Activated naive CD4-positive, alpha-beta T cell treated with anti-CD3 and anti-CD28 coated beads for 36 hours (primary cell): ENCODE measurements at regions of chr17 and their contacts with region 1.

Region 1: DNA sequence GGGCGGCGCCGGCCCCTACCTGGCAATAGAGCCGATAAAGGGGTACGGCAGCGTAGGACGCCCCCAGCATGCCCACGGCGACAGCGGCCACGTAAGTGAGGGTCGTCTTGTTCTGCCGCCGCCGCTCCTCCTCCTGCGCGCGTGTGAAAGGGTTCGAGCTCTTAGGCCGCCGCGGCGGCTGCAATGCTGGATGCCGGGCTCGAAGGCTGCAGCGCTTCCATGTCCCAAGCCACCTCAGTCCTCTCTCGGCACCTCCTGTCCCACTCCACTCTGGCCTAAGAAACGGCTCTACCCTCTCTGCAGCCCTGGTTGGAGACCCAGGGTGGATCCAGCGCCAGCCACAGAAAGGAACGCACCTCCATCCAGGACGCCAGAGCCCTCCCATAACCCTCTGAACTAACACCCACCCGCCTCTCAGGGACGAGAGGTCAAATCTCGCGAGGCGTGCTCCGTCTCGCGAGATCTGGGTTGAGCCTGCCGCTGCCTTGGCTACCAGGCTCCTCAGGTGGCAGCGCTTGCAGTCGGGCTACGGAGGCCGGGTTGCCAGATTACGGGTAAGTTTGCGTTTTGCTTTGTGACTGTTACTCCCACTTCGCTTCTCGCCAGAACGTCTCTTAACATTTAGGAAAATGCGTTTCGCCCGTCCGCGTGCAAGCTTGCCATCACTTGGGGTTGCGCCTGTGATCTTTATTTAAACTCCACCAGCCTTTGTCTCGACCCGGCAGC is at the starts of genes COX11 and STXBP4:
- DNase-seq: peak; percentile 96
- H3K4me3 Mint-ChIP-seq: no peak within 1 kb of the TSS
- H3K27ac Mint-ChIP-seq: no peak within 1 kb of the TSS
- H3K4me1 Mint-ChIP-seq: peaks cover 20% of the 10 kb centered on the region
- H3K27me3 Mint-ChIP-seq: no peaks in the 10 kb centered on the region
- total RNA-seq, gene COX11: 48.6 to 50.0 TPM
- total RNA-seq, gene STXBP4: 4.5 to 5.3 TPM

Region 2: GRCh38 chr17:54900457-54901229 is 67.8 kb before region 1 on chr17 and contains the start of gene TOM1L1:
- CTCF ChIA-PET with region 1: no interaction called
- intact Hi-C with region 1: loop called (anchors 1 kb)
- DNase-seq: peak; percentile 42
- H3K4me3 Mint-ChIP-seq: peak within 1 kb of the TSS; percentile 42
- H3K27ac Mint-ChIP-seq: no peak within 1 kb of the TSS
- H3K4me1 Mint-ChIP-seq: peaks cover 8% of the 10 kb centered on the region
- H3K27me3 Mint-ChIP-seq: peaks cover 41% of the 10 kb centered on the region
- total RNA-seq, gene TOM1L1: 1.2 to 1.3 TPM

Region 3: DNA sequence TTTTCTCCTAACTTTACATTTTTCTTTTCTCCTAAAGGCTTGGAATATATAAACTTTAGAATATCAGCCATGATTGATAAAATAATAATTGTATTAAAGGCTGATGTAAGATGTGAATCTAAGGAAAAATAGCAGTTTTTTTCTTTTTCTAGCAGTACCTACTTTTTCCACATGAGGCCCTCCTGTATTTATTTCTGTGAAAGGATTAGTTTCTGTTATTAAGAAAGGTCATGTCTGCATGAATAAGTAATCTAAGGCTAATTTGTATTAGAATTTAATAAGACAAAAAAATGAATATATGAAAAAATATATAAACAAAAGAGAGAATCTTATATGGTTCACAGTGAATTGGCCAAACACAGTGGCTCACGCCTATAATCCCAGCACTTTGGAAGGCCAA is 85.4 kb after region 1 on chr17:
- CTCF ChIA-PET with region 1: no interaction called
- intact Hi-C with region 1: no loop called
- DNase-seq: no peak
- H3K4me3 Mint-ChIP-seq: no peak overlapping the region
- H3K27ac Mint-ChIP-seq: no peak overlapping the region
- H3K4me1 Mint-ChIP-seq: no peaks in the 10 kb centered on the region
- H3K27me3 Mint-ChIP-seq: no peaks in the 10 kb centered on the region

Region 4: DNA sequence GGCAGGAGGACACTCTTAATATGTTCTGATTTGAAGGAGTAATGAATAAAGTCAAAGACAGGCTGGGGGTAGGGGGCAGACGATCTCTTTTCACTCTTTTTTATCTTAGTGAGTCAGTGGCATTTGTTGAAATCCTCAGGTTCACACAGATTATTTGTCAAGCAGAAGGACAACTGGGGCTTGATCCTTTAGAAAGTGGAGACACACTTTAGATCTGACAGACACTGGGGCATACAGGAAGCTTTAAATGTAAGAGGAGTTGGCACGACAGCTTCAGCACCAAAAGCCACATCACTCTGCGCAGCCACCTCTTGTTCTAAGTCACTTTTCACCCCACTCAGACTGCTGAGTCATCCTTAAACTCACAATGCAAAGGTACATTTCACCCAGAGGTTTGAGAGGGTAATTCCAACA is 121.7 kb after region 1 on chr17:
- CTCF ChIA-PET with region 1: no interaction called
- intact Hi-C with region 1: loop called (anchors 1 kb)
- DNase-seq: peak; percentile 54
- H3K4me3 Mint-ChIP-seq: no peak overlapping the region
- H3K27ac Mint-ChIP-seq: no peak overlapping the region
- H3K4me1 Mint-ChIP-seq: peaks cover 6% of the 10 kb centered on the region
- H3K27me3 Mint-ChIP-seq: no peaks in the 10 kb centered on the region

Region 5: DNA sequence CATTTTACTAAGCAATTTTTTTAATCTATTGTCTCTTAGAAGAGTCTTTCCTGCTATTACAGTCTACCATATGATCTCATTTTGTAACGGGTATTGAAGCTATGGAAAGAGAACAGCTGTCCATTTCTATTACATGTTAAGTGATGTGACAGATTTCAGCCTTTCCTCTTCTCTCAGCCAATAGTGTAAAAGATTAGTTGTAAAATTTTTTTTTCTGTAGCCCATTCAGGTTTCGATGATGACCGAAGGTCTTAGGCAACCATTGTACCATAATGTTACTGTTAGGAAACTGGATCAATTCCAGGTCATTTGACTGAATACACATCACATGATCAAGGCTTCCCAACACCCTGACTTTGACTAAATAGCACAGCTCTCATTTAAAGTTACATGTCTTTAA is 148.7 kb after region 1 on chr17:
- CTCF ChIA-PET with region 1: no interaction called
- intact Hi-C with region 1: no loop called
- DNase-seq: no peak
- H3K4me3 Mint-ChIP-seq: no peak overlapping the region
- H3K27ac Mint-ChIP-seq: no peak overlapping the region
- H3K4me1 Mint-ChIP-seq: no peaks in the 10 kb centered on the region
- H3K27me3 Mint-ChIP-seq: no peaks in the 10 kb centered on the region

Region 6: DNA sequence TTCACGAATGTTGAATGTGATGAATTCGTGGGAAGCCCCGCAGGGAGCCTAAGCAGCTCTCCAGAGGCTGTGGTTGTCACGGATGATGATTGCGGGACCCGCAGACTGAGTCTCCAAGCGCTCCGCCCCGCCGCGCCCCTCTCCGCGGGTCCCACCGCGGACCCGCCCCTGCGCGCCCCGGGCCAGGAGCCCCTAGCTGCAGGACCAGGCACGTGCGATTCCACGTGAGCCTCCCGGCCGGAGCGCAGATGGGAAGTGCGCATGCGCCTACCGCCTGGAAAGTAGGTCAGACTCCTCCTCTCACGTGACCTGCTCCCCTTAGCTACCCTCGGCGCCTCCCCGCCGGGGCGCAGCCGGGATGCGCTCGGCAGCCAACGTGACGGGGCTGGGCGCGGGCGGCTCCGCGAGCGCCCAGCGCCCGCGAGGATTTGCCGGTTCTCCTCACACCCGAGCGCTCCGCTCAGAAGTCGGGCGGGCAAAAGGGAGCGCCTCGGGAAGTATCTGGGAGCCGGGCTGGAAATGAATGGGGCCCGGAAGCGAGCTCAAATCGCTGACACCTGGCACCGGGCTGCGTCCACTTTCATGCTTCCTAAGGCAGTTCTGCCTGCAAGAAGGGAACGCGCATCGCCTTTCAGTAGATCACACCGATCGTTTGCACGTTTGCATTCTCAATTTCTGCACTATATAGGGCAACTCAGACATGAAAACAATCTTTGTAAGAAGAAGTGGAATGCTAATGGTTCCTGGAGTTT is 269.9 kb after region 1 on chr17:
- CTCF ChIA-PET with region 1: no interaction called
- intact Hi-C with region 1: loop called (anchors 1 kb)
- DNase-seq: peak; percentile 85
- H3K4me3 Mint-ChIP-seq: peak overlapping the region; percentile 77
- H3K27ac Mint-ChIP-seq: no peak overlapping the region
- H3K4me1 Mint-ChIP-seq: peaks cover 9% of the 10 kb centered on the region
- H3K27me3 Mint-ChIP-seq: peaks cover 24% of the 10 kb centered on the region

Region 7: DNA sequence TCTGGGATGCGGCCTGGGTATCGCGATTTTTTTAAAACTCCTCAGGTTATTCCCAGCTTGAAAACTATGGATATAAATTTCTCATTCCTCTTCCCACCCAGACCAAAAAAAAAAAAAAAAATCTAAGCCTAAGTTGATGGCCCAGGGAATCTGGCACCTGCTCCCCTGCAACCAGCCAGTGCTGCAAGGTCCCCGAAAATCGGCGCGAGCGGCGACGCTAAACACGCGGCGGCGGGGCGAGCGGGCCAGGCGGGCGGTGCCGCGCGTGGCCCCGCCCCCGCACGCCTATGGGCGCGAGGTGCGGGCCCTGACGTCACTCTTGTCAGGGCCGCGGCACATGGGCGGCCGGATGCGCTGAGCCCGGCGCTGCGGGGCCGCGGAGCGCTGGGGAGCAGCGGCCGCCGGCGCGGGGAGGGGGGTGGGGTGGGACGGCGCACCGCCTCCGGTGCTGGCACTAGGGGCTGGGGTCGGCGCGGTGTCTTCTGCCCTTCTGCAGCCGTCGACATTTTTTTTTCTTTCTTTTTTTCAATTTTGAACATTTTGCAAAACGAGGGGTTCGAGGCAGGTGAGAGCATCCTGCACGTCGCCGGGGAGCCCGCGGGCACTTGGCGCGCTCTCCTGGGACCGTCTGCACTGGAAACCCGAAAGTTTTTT is 296.3 kb after region 1 on chr17 and contains the start of gene HLF:
- CTCF ChIA-PET with region 1: no interaction called
- intact Hi-C with region 1: loop called (anchors 2 kb)
- DNase-seq: peak; percentile 68
- H3K4me3 Mint-ChIP-seq: peak within 1 kb of the TSS; percentile 48
- H3K27ac Mint-ChIP-seq: no peak within 1 kb of the TSS
- H3K4me1 Mint-ChIP-seq: peaks cover 13% of the 10 kb centered on the region
- H3K27me3 Mint-ChIP-seq: peaks cover 78% of the 10 kb centered on the region
- total RNA-seq, gene HLF: 0.79 to 0.86 TPM

Region 8: GRCh38 chr17:55735731-55736405 is 767.4 kb after region 1 on chr17:
- CTCF ChIA-PET with region 1: no interaction called
- intact Hi-C with region 1: loop called (anchors 5 kb)
- DNase-seq: peak; percentile 64
- H3K4me3 Mint-ChIP-seq: no peak overlapping the region
- H3K27ac Mint-ChIP-seq: no peak overlapping the region
- H3K4me1 Mint-ChIP-seq: peaks cover 30% of the 10 kb centered on the region
- H3K27me3 Mint-ChIP-seq: peaks cover 27% of the 10 kb centered on the region